CD8-positive, alpha-beta memory T cell (primary cell): ENCODE measurements at regions of chr19 and their contacts with region 1.

Region 1: GRCh38 chr19:48795055-48795684 is 15.7 kb downstream of the BCAT2 start:
- DNase-seq: peak; percentile 71 to 89 (median 83)
- H3K4me3 ChIP-seq: peak overlapping the region; percentile 96
- H3K4me3 Mint-ChIP-seq: peak overlapping the region; percentile 85 to 98 (median 96)
- H3K27ac ChIP-seq: peak overlapping the region; percentile 45
- H3K27ac Mint-ChIP-seq: peak overlapping the region; percentile 48 to 96 (median 94)
- H3K4me1 ChIP-seq: peaks cover 6% of the 10 kb centered on the region
- H3K4me1 Mint-ChIP-seq: peaks cover 5 to 14% (median 8%) of the 10 kb centered on the region in 3 donors
- H3K27me3 ChIP-seq: no peaks in the 10 kb centered on the region
- H3K27me3 Mint-ChIP-seq: no peaks in the 10 kb centered on the region

Region 2: GRCh38 chr19:48760504-48761205 is 34.5 kb before region 1 on chr19:
- CTCF ChIA-PET with region 1: no interaction called
- POLR2A ChIA-PET with region 1: no interaction called
- DNase-seq: no peak
- H3K4me3 ChIP-seq: no peak overlapping the region
- H3K4me3 Mint-ChIP-seq: no peak overlapping the region
- H3K27ac ChIP-seq: no peak overlapping the region
- H3K27ac Mint-ChIP-seq: no peak overlapping the region
- H3K4me1 ChIP-seq: peaks cover 4% of the 10 kb centered on the region
- H3K4me1 Mint-ChIP-seq: peaks cover 0 to 4% (median 3%) of the 10 kb centered on the region in 3 donors
- H3K27me3 ChIP-seq: no peaks in the 10 kb centered on the region
- H3K27me3 Mint-ChIP-seq: peaks cover 17 to 20% of the 10 kb centered on the region in 2 donors

Region 3: DNA sequence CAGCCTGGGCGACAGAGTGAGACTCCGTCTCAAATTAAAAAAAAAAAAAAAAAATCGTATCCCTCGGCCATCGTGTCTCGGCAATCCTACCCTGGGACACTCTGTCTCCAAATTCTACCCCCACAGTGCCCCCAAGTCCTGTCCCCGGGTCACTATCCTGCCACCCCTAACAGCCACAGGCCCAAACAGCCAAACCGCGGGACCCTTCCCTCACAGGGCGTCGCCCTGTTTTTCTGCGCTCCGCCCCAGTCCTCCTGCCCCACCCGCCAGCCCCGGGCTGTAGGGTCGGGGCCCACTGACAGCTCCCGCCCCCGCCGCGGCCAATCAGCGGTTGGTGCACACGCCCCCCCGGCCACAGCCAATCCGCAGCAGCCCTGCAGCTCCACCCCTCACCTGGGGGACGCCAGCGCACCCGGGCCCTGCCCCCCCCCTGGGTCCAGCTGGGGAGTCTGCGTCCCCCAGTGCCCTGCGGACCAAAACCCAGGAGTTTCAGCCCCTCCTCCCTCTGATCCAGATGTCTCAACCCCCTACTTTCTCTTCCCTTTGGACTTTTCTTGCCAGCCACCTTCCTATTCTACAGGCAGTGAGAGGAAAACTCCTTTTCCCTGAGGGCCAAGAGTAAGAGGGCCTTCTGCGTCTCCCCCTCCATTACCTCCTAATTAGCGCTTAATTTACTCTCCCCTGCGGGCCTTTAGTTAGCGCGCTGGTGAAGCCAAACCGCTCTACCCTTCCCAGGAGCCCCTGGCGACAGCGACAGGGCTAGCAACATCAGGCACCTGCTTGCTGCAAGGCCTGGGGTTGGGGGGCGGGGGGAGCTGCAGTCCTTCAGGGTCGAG is 17.1 kb after region 1 on chr19:
- CTCF ChIA-PET with region 1: interaction called, 18 read pairs
- POLR2A ChIA-PET with region 1: interaction called, 4 read pairs
- DNase-seq: peak; percentile 35 to 66 (median 55)
- H3K4me3 ChIP-seq: no peak overlapping the region
- H3K4me3 Mint-ChIP-seq: peak overlapping the region; percentile 76 to 91 (median 82)
- H3K27ac ChIP-seq: peak overlapping the region; percentile 59
- H3K27ac Mint-ChIP-seq: peak overlapping the region; percentile 38 to 82 (median 68)
- H3K4me1 ChIP-seq: peaks cover 18% of the 10 kb centered on the region
- H3K4me1 Mint-ChIP-seq: peaks cover 22 to 32% (median 28%) of the 10 kb centered on the region in 3 donors
- H3K27me3 ChIP-seq: no peaks in the 10 kb centered on the region
- H3K27me3 Mint-ChIP-seq: no peaks in the 10 kb centered on the region

Region 4: DNA sequence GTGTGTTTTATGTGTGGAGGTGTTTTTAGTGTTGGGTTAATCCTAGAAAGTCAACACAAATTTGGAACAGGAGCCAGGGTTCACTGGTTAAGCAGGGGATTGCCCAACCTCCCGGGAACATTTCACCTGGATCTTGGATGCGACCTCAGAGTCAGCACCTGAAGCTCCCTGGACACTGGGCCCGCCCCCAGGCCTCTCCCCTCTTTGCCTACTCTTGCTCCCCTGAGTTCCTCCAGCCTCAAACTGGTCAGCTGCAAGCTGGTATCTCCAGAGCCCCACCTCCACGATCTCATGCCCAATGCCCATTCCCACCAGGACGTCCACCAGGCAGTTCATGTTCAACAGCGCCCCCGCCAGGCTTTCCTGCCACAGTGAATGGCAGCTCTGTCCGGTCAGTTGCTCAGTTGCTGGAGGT is 31.4 kb after region 1 on chr19:
- CTCF ChIA-PET with region 1: interaction called, 14 read pairs
- POLR2A ChIA-PET with region 1: no interaction called
- DNase-seq: no peak
- H3K4me3 ChIP-seq: no peak overlapping the region
- H3K4me3 Mint-ChIP-seq: no peak overlapping the region
- H3K27ac ChIP-seq: no peak overlapping the region
- H3K27ac Mint-ChIP-seq: no peak overlapping the region
- H3K4me1 ChIP-seq: no peaks in the 10 kb centered on the region
- H3K4me1 Mint-ChIP-seq: no peaks in the 10 kb centered on the region
- H3K27me3 ChIP-seq: no peaks in the 10 kb centered on the region
- H3K27me3 Mint-ChIP-seq: no peaks in the 10 kb centered on the region

Region 5: GRCh38 chr19:48835734-48836088 is 40.5 kb after region 1 on chr19:
- CTCF ChIA-PET with region 1: interaction called, 27 read pairs
- POLR2A ChIA-PET with region 1: no interaction called
- DNase-seq: peak; percentile 83 to 93 (median 88)
- H3K4me3 ChIP-seq: peak overlapping the region; percentile 66
- H3K4me3 Mint-ChIP-seq: peak overlapping the region; percentile 76 to 90 (median 83)
- H3K27ac ChIP-seq: peak overlapping the region; percentile 53
- H3K27ac Mint-ChIP-seq: peak overlapping the region in 6 of 8 donors; percentile 28 to 95 (median 88)
- H3K4me1 ChIP-seq: peaks cover 23% of the 10 kb centered on the region
- H3K4me1 Mint-ChIP-seq: peaks cover 17 to 23% (median 23%) of the 10 kb centered on the region in 3 donors
- H3K27me3 ChIP-seq: peaks cover 8% of the 10 kb centered on the region
- H3K27me3 Mint-ChIP-seq: peaks cover 11 to 17% of the 10 kb centered on the region in 2 donors

Region 6: DNA sequence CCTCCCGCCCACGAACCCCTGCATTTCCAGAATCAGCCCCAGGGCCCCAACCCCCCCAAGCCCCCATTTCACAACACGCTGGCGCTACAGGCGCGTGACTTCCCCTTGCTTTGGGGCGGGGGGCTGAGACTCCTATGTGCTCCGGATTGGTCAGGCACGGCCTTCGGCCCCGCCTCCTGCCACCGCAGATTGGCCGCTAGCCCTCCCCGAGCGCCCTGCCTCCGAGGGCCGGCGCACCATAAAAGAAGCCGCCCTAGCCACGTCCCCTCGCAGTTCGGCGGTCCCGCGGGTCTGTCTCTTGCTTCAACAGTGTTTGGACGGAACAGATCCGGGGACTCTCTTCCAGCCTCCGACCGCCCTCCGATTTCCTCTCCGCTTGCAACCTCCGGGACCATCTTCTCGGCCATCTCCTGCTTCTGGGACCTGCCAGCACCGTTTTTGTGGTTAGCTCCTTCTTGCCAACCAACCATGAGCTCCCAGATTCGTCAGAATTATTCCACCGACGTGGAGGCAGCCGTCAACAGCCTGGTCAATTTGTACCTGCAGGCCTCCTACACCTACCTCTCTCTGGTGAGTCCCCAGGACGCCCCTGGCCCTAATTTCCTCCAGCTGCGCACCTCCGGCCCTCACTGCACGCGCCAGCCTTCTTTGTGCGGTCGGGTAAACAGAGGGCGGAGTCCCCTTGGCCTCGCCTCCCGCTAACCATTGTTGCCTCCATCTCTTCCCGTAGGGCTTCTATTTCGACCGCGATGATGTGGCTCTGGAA is 170.1 kb after region 1 on chr19 and contains the start of gene FTL:
- CTCF ChIA-PET with region 1: interaction called, 22 read pairs
- POLR2A ChIA-PET with region 1: interaction called, 5 read pairs
- DNase-seq: peak; percentile 76 to 90 (median 85)
- H3K4me3 ChIP-seq: peak within 1 kb of the TSS; percentile 88
- H3K4me3 Mint-ChIP-seq: peak within 1 kb of the TSS; percentile 91 to 100 (median 100)
- H3K27ac ChIP-seq: peak within 1 kb of the TSS; percentile 94
- H3K27ac Mint-ChIP-seq: peak within 1 kb of the TSS; percentile 90 to 99 (median 97)
- H3K4me1 ChIP-seq: peaks cover 42% of the 10 kb centered on the region
- H3K4me1 Mint-ChIP-seq: peaks cover 50 to 76% (median 59%) of the 10 kb centered on the region in 3 donors
- H3K27me3 ChIP-seq: no peaks in the 10 kb centered on the region
- H3K27me3 Mint-ChIP-seq: peaks cover 0 to 9% of the 10 kb centered on the region in 2 donors
- total RNA-seq, gene FTL: 1,478 to 1,489 TPM

Region 7: DNA sequence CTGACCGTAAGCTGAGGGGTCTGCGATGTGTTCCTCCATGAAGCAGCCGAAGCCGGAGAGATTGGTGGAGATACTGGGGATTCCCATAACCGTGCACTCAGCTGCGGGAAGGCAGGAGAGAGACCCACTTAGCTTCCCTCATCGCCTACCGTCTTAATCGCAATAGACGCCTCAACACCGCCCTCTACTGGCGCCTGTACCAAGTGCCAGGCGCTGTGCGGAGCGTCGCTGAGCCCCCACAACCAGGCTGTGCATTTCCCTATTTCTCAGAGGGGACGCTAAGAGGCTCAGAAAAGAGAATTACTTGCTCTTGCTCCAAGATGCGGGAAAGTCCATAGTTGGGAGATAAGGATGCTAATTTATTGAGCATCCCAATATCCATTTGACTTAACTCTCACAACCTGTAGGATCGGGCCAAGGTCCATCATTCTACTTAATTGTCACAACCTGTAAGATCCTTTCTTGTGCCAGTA is 175.8 kb after region 1 on chr19:
- CTCF ChIA-PET with region 1: interaction called, 22 read pairs
- POLR2A ChIA-PET with region 1: interaction called, 5 read pairs
- DNase-seq: peak; percentile 59 to 84 (median 72)
- H3K4me3 ChIP-seq: no peak overlapping the region
- H3K4me3 Mint-ChIP-seq: no peak overlapping the region
- H3K27ac ChIP-seq: no peak overlapping the region
- H3K27ac Mint-ChIP-seq: peak overlapping the region in 4 of 8 donors; percentile 13 to 56 (median 21)
- H3K4me1 ChIP-seq: peaks cover 12% of the 10 kb centered on the region
- H3K4me1 Mint-ChIP-seq: peaks cover 16 to 29% (median 23%) of the 10 kb centered on the region in 3 donors
- H3K27me3 ChIP-seq: no peaks in the 10 kb centered on the region
- H3K27me3 Mint-ChIP-seq: peaks cover 0 to 1% of the 10 kb centered on the region in 2 donors